ENCODE measurements at regions of chr19 and their contacts with region 1.

Region 1: DNA sequence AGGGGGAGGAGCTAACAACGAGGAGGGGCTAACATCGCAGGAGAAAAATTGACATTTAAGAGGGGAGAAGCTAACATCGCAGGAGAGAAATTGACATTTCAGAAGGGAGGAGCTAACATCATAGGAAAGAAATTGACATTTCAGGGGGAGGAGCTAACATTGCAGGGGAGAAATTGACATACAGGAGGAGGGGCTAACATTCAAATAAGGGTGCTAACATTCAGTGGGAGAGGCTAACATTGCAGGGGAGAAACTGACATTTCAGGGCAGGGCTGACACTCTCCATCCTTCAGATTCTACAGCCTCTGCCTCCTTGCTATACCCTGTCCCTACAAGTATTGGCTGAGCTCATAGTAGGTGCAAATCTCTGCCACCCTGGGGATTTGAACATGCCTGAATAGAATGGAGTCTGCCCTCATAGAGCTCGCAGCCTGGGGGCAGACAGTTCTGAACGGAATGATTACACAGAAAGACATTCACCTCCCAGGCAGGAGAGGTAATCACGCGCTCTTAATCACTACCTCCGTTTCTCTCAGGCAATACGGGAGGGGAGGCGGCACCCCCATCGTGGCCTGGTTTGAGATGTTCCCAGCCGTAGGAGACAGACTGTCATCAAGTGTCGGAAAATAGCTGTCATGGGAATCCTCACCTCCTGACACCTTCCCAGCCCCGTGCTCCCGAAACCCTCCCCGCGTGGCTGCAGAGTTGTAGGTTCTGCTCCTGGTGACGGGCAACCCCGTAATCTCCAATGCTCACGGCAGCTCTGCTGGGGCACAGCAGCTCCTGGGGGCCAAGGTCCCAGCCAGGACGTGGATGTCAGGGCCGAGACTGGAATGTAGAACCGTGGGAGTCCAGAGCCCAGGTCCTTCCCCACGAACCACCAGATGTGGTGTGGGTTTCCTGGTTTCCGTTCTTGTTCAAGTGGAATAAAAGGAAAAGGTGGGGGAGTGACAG is 9.5 kb downstream of the GPR32 start:
- DNase-seq: no peak
- H3K4me3 ChIP-seq: no peak overlapping the region
- H3K27ac ChIP-seq: no peak overlapping the region
- H3K4me1 ChIP-seq: peaks cover 2 to 8% (median 5%) of the 10 kb centered on the region in 6 donors
- H3K27me3 ChIP-seq: peaks cover 3 to 87% (median 48%) of the 10 kb centered on the region in 7 donors
- CTCF ChIP-seq: no peak
- POLR2A ChIP-seq: no peak

Region 2: DNA sequence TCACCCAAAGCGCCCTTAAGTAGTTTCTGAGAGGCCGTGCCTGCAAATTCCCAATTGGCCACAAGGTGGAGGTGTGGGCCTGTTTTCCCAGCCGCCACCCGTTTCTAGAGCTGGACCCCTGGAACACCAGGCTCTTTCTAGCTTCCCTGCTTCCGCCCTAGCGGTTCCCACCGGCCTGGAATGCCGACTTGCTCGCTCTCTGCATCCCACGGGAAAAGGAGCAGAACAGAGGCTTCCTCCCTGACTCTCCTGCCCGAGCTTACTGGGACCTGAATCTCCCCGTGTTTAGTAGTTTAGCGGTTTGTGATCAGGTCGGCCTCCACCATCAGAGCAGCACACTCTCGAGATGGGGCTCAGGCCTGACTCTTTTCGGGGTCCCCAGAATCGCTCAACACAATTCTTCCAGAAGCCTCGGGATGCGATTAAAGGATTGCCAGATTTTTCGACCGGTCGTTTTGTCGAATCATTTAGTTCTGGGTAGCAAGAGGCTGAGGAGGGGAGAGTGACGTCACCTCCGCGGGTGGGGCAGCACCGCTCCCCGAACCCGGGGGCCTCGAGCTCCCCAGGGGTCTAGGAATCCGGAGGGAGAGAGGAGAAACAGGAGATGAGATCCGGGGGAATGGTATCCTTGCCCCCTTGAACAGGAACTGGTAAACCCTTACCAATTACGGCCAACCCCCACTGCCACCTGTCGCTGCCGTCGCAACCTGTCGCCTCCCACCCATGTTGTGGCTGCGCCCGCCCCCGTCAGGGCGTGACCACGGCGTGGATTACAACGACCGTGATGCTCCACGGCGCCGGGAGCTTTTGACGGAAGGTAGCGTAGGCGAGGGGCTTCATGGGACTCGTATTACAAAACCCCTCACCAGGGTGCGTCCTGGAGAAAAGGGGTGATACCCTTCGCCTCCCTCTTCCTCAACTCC is 422.3 kb before region 1 on chr19:
- intact Hi-C with region 1: loop called (anchors 5 kb)
- DNase-seq: peak; percentile 96
- H3K4me3 ChIP-seq: peak overlapping the region; percentile 42 to 72 (median 48)
- H3K27ac ChIP-seq: peak overlapping the region; percentile 86 to 97 (median 94)
- H3K4me1 ChIP-seq: peaks cover 0 to 41% (median 12%) of the 10 kb centered on the region in 6 donors
- H3K27me3 ChIP-seq: no peaks in the 10 kb centered on the region
- CTCF ChIP-seq: peak; percentile 86 to 95 (median 93)
- POLR2A ChIP-seq: peak in 2 of 3 donors; percentile 4 to 25